Activated CD4-positive, alpha-beta T cell treated with anti-CD3 and anti-CD28 coated beads for 36 hours (primary cell): ENCODE measurements at regions of chr3 and their contacts with region 1.

Region 1: DNA sequence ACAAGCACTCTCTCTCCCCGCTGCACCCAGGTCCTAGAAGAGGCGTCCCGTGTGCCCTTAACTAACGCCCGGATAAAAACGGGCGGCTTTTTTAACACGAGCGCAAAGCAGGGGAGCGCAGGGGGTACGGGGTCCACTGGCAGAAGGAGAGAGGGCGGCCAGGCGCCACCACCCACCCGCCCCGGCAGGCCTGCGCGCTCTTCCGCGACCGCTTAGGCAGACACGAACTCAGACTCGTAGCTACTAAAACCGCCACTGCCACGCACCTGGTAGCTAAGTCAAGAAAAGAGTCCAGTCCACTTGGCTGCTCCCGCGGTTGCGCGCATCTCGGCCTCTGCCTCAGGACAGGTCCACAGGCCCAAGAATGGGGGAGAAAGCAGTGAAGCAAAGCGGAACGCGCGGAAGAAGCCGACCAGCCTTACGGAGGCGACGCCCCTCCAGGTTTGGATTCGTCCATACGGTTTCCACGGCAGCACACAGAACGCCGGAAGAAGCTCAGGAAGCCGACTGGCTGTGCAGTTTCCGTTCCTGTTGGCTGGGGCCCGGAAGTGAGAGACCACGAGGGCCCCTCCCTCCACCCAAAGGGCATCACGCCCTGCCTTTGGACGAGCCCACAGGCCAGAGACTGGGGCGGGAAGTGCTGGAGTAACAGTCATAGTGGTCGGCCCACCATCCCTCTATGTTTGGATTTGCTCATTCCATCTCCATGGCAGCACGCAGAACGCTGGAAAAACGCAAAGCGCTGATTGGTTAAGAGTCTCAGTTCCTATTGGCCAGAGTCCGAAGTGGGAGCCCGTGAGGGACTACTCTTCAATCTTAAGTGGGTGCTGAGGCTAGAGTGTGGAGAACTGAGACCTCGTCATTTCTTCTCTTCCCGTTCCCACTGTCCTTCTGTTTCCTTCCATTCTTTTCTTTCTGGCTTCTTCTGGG is at the start of gene ULK4:
- DNase-seq: peak; percentile 96
- ATAC-seq: peak; percentile 91
- H3K4me3 Mint-ChIP-seq: peak within 1 kb of the TSS; percentile 95
- H3K27ac Mint-ChIP-seq: peak within 1 kb of the TSS; percentile 92
- H3K4me1 Mint-ChIP-seq: peaks cover 13% of the 10 kb centered on the region
- H3K27me3 Mint-ChIP-seq: no peaks in the 10 kb centered on the region
- total RNA-seq, gene ULK4: 13.1 to 14.2 TPM

Region 2: DNA sequence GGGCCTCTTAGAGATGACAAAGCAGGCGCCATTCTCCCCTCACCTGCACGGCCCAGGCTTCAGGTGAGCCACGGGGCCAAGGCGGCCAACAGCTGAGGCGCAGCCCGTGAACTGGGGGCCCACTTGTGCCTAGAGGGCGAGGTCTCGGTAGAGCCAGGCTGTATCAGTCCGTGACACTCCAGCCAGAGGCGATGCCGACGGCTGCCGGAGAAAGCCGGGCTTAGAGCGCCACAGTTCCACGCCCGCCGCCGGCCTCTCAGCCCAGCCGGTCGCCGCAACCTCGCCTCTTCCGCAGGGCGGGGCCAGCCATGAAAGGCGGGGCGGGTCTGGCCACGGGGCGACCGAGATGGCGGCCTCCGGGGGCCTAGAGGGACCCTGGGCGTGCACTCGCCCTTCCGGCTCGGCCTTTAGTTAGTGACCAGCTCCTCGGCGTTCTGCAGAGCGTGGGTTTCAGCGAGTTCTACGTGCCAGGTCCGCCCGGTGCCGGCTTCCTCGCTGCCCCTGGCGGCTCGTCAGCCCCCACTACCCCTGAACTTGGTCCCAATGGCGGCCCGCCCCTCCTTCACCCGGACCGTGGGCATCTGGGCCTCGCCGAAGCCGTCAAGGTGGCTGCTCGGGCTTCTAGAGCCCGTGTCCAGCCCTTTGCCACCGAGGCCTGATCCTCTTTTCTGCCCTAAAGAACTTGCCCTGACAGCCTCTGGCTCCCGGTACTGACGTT is 1437.3 kb before region 1 on chr3 and contains the start of gene ZNF621:
- CTCF ChIA-PET with region 1: no interaction called
- POLR2A ChIA-PET with region 1: no interaction called
- intact Hi-C with region 1: loop called in 1 of 2 experiments (anchors 5 kb)
- DNase-seq: peak; percentile 89
- ATAC-seq: peak; percentile 97
- H3K4me3 Mint-ChIP-seq: peak within 1 kb of the TSS; percentile 91
- H3K27ac Mint-ChIP-seq: peak within 1 kb of the TSS; percentile 94
- H3K4me1 Mint-ChIP-seq: peaks cover 24% of the 10 kb centered on the region
- H3K27me3 Mint-ChIP-seq: no peaks in the 10 kb centered on the region
- total RNA-seq, gene ZNF621: 17.8 to 18.7 TPM

Region 3: GRCh38 chr3:41198950-41199865 is 762.8 kb before region 1 on chr3 and contains the start of gene CTNNB1:
- CTCF ChIA-PET with region 1: no interaction called
- POLR2A ChIA-PET with region 1: no interaction called
- intact Hi-C with region 1: loop called in 1 of 2 experiments (anchors 2 kb)
- DNase-seq: peak; percentile 94
- ATAC-seq: peak; percentile 86
- H3K4me3 Mint-ChIP-seq: peak within 1 kb of the TSS; percentile 91
- H3K27ac Mint-ChIP-seq: peak within 1 kb of the TSS; percentile 88
- H3K4me1 Mint-ChIP-seq: peaks cover 36% of the 10 kb centered on the region
- H3K27me3 Mint-ChIP-seq: peaks cover 8% of the 10 kb centered on the region
- total RNA-seq, gene CTNNB1: 114 to 158 TPM

Region 4: GRCh38 chr3:42090973-42091731 is 129.1 kb after region 1 on chr3 and contains the start of gene TRAK1:
- CTCF ChIA-PET with region 1: no interaction called
- POLR2A ChIA-PET with region 1: no interaction called
- intact Hi-C with region 1: loop called (anchors 1 to 5 kb)
- DNase-seq: no peak
- ATAC-seq: no peak
- H3K4me3 Mint-ChIP-seq: no peak within 1 kb of the TSS
- H3K27ac Mint-ChIP-seq: no peak within 1 kb of the TSS
- H3K4me1 Mint-ChIP-seq: peaks cover 44% of the 10 kb centered on the region
- H3K27me3 Mint-ChIP-seq: no peaks in the 10 kb centered on the region
- total RNA-seq, gene TRAK1: 22.4 to 23.6 TPM

Region 5: DNA sequence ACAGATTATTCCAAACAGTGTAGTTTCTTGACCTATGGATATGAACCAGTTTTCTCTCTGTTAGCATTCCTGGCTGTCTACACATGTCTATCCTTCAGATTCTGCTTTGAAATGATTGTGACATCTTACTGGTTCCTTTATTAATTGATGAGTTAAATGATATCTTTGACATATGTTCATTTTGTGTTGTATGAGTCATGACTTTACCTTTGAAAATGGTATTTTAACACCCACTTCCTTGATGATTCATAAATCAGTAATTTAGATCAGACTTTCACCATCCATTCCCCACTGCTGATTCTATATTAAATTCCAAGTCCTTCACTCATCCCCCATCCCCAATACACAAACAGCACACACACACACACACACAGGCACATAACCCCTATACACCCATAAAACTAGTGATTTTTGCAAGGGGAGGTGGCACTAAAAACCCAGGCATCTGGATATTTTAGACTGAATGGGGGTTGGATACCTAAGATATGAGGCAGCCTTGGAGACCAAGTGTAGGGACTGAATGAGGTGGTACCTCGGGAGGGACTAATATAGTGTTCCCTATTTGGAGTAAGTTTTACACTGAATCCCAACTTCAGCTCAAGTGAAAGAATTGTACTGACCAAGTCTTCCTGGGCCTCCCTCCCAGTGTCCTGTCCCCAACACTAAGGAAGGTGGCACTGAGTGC is 294.3 kb after region 1 on chr3:
- CTCF ChIA-PET with region 1: no interaction called
- POLR2A ChIA-PET with region 1: no interaction called
- intact Hi-C with region 1: no loop called
- DNase-seq: no peak
- ATAC-seq: peak; percentile 73
- H3K4me3 Mint-ChIP-seq: no peak overlapping the region
- H3K27ac Mint-ChIP-seq: no peak overlapping the region
- H3K4me1 Mint-ChIP-seq: peaks cover 6% of the 10 kb centered on the region
- H3K27me3 Mint-ChIP-seq: peaks cover 29% of the 10 kb centered on the region

Region 6: DNA sequence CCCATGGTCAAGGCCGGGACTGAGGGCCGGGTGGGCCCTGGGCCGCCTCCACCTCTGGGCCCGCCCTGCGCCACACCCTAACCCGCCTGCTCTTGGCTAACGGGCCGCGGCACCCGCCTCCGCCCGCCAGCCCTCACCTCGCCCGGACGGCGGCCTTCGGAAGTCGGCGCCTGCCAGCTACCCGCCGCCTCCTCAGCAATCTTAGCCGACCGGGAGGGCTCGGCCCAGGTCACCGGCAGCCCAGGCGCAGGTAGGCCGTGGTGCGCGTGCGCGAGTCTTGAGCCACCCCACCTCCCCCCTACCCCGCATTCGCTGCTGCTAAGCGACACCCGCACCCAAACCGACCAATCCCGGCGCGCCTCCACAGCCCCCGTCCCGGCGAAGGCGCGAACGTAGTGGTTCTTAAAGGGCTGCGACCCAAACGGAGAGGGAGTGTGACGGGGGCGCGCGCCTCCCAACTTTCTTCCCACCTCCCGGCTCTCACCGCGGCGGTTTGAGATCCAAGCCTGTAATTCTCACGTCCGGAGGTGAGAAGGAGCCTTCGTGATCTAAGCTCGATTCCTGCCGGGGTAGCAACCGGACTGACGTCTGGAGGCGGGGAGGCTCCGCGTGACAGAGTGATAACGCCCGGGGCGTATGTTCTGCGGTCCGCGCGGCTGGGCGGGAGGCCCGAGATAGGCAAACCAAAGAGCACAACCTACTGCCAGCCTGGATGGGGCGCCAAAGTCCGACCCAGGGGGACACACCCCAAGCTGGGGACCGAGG is 619.9 kb after region 1 on chr3 and contains the start of gene SEC22C:
- CTCF ChIA-PET with region 1: no interaction called
- POLR2A ChIA-PET with region 1: no interaction called
- intact Hi-C with region 1: loop called in 1 of 2 experiments (anchors 1 kb)
- DNase-seq: peak; percentile 98
- ATAC-seq: peak; percentile 94
- H3K4me3 Mint-ChIP-seq: peak within 1 kb of the TSS; percentile 81
- H3K27ac Mint-ChIP-seq: peak within 1 kb of the TSS; percentile 94
- H3K4me1 Mint-ChIP-seq: peaks cover 43% of the 10 kb centered on the region
- H3K27me3 Mint-ChIP-seq: no peaks in the 10 kb centered on the region
- total RNA-seq, gene SEC22C: 34.2 to 42.5 TPM

Region 7: GRCh38 chr3:43621656-43622432 is 1659.8 kb after region 1 on chr3 and contains the start of gene ANO10:
- CTCF ChIA-PET with region 1: no interaction called
- POLR2A ChIA-PET with region 1: no interaction called
- intact Hi-C with region 1: loop called in 1 of 2 experiments (anchors 5 kb)
- DNase-seq: peak; percentile 98
- ATAC-seq: peak; percentile 95
- H3K4me3 Mint-ChIP-seq: peak within 1 kb of the TSS; percentile 83
- H3K27ac Mint-ChIP-seq: peak within 1 kb of the TSS; percentile 87
- H3K4me1 Mint-ChIP-seq: peaks cover 12% of the 10 kb centered on the region
- H3K27me3 Mint-ChIP-seq: no peaks in the 10 kb centered on the region
- total RNA-seq, gene ANO10: 6.9 to 9.4 TPM